ENCODE measurements at regions of chr5 and their contacts with region 1.

Region 1: DNA sequence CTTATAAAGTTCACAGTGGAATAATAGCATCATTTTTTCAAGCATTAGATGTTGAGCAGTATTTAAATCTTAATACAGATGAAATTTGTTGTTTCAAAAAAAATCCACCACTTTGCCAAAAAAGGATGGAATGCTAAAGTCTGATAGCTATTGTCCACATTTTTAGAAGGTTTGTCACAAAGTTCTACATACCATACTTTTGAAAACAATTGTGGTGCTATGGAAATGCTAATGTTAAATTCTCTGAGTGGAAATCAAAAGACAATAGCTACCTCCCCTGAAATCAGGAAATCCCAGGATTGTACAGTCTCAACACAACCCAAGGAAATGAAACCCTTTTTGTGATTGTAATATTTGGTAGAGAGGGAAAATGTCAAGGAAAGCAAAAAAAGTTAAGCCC is 19.3 kb upstream of the GRAMD2B start:
- DNase-seq: no peak
- H3K27ac ChIP-seq: no peak overlapping the region
- CTCF ChIP-seq: no peak

Region 2: DNA sequence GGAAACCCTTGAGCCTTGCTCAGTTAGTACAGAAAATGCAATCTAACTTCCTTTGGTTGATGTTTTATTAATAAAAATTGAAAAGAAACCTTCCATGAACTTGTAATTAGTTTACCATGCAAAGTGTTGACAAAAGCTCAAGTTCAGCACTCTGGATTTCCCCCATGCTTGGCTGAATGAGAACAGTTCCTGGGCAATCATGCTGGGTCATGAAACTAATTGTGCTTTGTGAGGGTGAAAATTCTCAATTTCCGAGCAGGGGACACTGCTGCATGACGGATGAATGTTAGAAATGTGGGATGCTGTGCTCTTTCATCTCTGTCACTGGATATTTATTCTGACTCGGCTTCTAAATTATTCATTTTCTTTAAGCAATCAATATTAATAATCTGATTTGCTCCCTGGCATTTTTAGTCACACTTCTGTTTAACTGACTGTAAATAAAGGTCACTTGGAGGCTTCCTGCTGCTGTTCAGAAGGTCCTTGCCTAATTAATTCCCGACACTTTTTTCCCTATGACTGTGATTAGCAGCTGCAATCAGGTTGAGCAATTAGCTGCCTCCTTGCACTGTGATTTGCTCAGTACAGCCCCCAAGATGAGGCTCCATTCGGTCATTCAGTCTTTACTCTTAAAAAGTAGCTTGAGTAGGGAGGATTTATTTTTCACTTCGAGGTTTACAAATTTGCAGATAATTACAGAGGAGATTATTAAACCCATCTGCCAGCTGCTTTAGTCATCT is 979.3 kb before region 1 on chr5:
- CTCF ChIA-PET with region 1: interaction called, 11 read pairs
- POLR2A ChIA-PET with region 1: no interaction called
- DNase-seq: no peak
- H3K27ac ChIP-seq: no peak overlapping the region
- CTCF ChIP-seq: no peak

Measured in RWPE1 (cell line).